Naive thymus-derived CD4-positive, alpha-beta T cell (primary cell): ENCODE measurements at regions of chr10 and their contacts with region 1.

Region 1: DNA sequence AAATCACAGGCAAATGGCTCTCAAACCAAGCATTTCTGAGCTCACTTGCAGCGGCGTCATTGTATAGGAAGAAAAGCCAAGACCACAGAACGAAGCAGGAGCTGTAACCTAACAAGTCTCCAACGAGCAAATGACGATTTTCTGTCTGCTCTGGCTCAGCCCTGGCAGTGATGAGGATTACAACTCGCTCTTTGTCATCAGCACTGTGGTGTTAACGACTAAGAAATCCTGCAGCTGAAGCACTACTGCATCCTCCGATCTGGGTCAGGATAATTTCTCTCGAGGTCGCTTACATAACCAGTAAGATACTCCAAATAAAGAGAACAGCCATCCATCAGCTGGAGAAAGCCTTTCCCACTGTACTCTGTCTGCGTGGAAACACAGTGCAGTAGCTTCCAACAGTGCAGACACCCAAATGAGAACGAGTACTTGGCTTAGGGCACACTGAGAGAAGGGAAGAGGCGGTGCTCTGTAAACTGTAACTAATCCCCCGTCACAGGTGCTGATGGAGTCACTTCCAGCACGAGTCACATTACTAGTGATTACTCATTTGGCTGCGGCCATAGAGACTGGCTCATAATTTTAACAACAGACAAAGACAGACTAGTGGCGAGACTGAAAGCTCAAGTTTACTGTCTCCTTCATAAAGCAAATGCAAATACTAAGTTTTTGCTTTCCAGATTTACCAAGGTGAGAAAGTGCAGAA is 135.8 kb downstream of the NRBF2 start:
- DNase-seq: peak; percentile 55 to 95 (median 89)
- ATAC-seq: peak; percentile 95
- H3K4me3 ChIP-seq: peak overlapping the region; percentile 60
- H3K4me3 Mint-ChIP-seq: peak overlapping the region; percentile 93 to 99 (median 98)
- H3K27ac ChIP-seq: peak overlapping the region; percentile 91
- H3K27ac Mint-ChIP-seq: peak overlapping the region; percentile 97 to 100 (median 99)
- H3K4me1 ChIP-seq: peaks cover 9 to 19% of the 10 kb centered on the region in 2 donors
- H3K4me1 Mint-ChIP-seq: peaks cover 9 to 33% (median 19%) of the 10 kb centered on the region in 7 donors
- H3K27me3 ChIP-seq: no peaks in the 10 kb centered on the region
- H3K27me3 Mint-ChIP-seq: no peaks in the 10 kb centered on the region

Region 2: DNA sequence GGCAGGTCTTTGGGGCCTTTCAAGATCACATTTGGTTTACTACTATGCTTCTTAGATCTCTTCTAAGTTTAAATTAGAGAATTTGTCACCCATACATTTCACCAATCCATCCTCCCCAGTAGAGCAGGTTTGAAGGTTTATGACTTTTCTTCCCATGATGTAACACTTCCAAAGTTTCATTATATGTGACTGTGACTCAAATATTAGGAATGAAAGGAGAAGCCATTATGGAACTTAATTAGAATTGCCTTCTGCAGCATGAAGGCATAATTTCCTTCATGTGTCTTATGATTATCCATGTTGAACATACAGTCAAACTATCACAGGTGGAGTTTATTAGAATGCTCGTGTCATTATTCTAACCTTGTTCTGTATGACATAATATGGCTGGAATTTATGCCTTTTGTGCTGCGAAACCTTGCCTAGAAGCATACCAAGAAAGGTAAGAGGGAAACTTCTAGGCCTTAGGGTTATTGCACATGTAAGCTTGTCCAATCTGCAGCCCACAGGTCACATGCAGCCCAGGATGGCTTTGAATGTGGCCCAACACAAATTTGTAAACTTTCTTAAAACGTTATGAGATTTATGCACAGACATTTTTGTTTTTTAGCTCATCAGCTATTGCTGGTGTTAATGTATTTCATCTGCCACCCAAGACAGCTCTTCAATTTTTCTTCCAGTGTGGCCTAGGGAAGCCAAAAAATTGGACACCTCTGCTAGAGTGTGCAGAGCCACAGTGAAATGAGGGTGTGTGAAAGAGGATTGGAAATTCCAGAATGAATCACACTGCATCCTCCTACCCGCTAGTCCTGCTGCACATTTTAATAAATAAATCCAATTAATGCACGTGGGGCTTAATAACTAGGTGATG is 1949.3 kb before region 1 on chr10:
- CTCF ChIA-PET with region 1: no interaction called
- POLR2A ChIA-PET with region 1: no interaction called
- intact Hi-C with region 1: no loop called
- DNase-seq: no peak
- ATAC-seq: no peak
- H3K4me3 ChIP-seq: no peak overlapping the region
- H3K4me3 Mint-ChIP-seq: no peak overlapping the region
- H3K27ac ChIP-seq: no peak overlapping the region
- H3K27ac Mint-ChIP-seq: no peak overlapping the region
- H3K4me1 ChIP-seq: no peaks in the 10 kb centered on the region
- H3K4me1 Mint-ChIP-seq: peaks cover 0 to 4% (median 3%) of the 10 kb centered on the region in 7 donors
- H3K27me3 ChIP-seq: no peaks in the 10 kb centered on the region
- H3K27me3 Mint-ChIP-seq: peaks cover 0 to 11% (median 0%) of the 10 kb centered on the region in 5 donors

Region 3: GRCh38 chr10:61896854-61897661 is 1371.9 kb before region 1 on chr10:
- CTCF ChIA-PET with region 1: no interaction called
- POLR2A ChIA-PET with region 1: no interaction called
- intact Hi-C with region 1: loop called (anchors 2 to 5 kb)
- DNase-seq: peak; percentile 20 to 76 (median 66)
- ATAC-seq: peak; percentile 80
- H3K4me3 ChIP-seq: peak overlapping the region; percentile 51
- H3K4me3 Mint-ChIP-seq: peak overlapping the region; percentile 77 to 98 (median 86)
- H3K27ac ChIP-seq: no peak overlapping the region
- H3K27ac Mint-ChIP-seq: peak overlapping the region; percentile 46 to 99 (median 86)
- H3K4me1 ChIP-seq: peaks cover 18 to 27% of the 10 kb centered on the region in 2 donors
- H3K4me1 Mint-ChIP-seq: peaks cover 12 to 35% (median 33%) of the 10 kb centered on the region in 7 donors
- H3K27me3 ChIP-seq: no peaks in the 10 kb centered on the region
- H3K27me3 Mint-ChIP-seq: no peaks in the 10 kb centered on the region

Region 4: GRCh38 chr10:62050893-62051433 is 1218.0 kb before region 1 on chr10:
- CTCF ChIA-PET with region 1: interaction called, 4 read pairs
- POLR2A ChIA-PET with region 1: no interaction called
- intact Hi-C with region 1: loop called in 1 of 2 experiments (anchors 5 kb)
- DNase-seq: peak; percentile 25 to 88 (median 78)
- ATAC-seq: peak; percentile 86
- H3K4me3 ChIP-seq: peak overlapping the region; percentile 62
- H3K4me3 Mint-ChIP-seq: peak overlapping the region; percentile 81 to 94 (median 88)
- H3K27ac ChIP-seq: peak overlapping the region; percentile 77
- H3K27ac Mint-ChIP-seq: peak overlapping the region; percentile 91 to 100 (median 96)
- H3K4me1 ChIP-seq: peaks cover 59 to 63% of the 10 kb centered on the region in 2 donors
- H3K4me1 Mint-ChIP-seq: peaks cover 60 to 99% (median 96%) of the 10 kb centered on the region in 7 donors
- H3K27me3 ChIP-seq: no peaks in the 10 kb centered on the region
- H3K27me3 Mint-ChIP-seq: no peaks in the 10 kb centered on the region

Region 5: GRCh38 chr10:63133056-63133820 is 135.7 kb before region 1 on chr10 and contains the start of gene NRBF2:
- CTCF ChIA-PET with region 1: no interaction called
- POLR2A ChIA-PET with region 1: interaction called, 6 read pairs
- intact Hi-C with region 1: loop called (anchors 1 kb)
- DNase-seq: peak; percentile 96 to 98 (median 98)
- ATAC-seq: peak; percentile 94
- H3K4me3 ChIP-seq: peak within 1 kb of the TSS; percentile 81
- H3K4me3 Mint-ChIP-seq: peak within 1 kb of the TSS; percentile 75 to 94 (median 92)
- H3K27ac ChIP-seq: peak within 1 kb of the TSS; percentile 98
- H3K27ac Mint-ChIP-seq: peak within 1 kb of the TSS; percentile 89 to 98 (median 96)
- H3K4me1 ChIP-seq: peaks cover 17 to 30% of the 10 kb centered on the region in 2 donors
- H3K4me1 Mint-ChIP-seq: peaks cover 10 to 49% (median 32%) of the 10 kb centered on the region in 7 donors
- H3K27me3 ChIP-seq: no peaks in the 10 kb centered on the region
- H3K27me3 Mint-ChIP-seq: no peaks in the 10 kb centered on the region
- total RNA-seq, gene NRBF2: 14.5 to 26.0 (median 19.2) TPM

Region 6: GRCh38 chr10:63227207-63227915 is 41.6 kb before region 1 on chr10:
- CTCF ChIA-PET with region 1: interaction called, 4 read pairs
- POLR2A ChIA-PET with region 1: interaction called, 18 read pairs
- intact Hi-C with region 1: loop called (anchors 1 kb)
- DNase-seq: peak in 6 of 9 donors; percentile 35 to 63 (median 56)
- ATAC-seq: peak; percentile 43
- H3K4me3 ChIP-seq: no peak overlapping the region
- H3K4me3 Mint-ChIP-seq: peak overlapping the region; percentile 8 to 69 (median 53)
- H3K27ac ChIP-seq: peak overlapping the region; percentile 80
- H3K27ac Mint-ChIP-seq: peak overlapping the region; percentile 28 to 97 (median 94)
- H3K4me1 ChIP-seq: peaks cover 23 to 42% of the 10 kb centered on the region in 2 donors
- H3K4me1 Mint-ChIP-seq: peaks cover 26 to 86% (median 75%) of the 10 kb centered on the region in 7 donors
- H3K27me3 ChIP-seq: no peaks in the 10 kb centered on the region
- H3K27me3 Mint-ChIP-seq: no peaks in the 10 kb centered on the region

Region 7: DNA sequence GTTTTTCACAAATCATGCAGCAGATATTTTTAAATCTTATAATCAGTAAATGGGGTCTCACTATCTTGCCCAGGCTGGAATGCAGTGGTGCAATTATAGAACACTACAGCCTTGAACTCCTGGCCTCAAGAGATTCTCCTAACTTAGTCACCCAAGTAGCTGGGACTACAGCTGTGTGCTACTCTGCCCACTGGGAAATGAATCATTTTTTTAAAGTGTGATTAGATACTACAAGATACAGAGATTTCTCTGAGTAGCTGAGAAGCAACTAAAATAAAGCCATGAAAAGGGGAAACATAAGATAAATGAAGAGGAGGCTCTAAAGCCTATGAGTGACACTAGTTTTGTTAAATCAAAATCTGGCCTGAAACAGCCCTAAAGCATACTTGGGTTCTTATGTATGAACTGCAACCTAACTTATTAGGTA is 77.1 kb after region 1 on chr10:
- CTCF ChIA-PET with region 1: no interaction called
- POLR2A ChIA-PET with region 1: no interaction called
- intact Hi-C with region 1: loop called in 1 of 2 experiments (anchors 5 kb)
- DNase-seq: no peak
- ATAC-seq: no peak
- H3K4me3 ChIP-seq: no peak overlapping the region
- H3K4me3 Mint-ChIP-seq: no peak overlapping the region
- H3K27ac ChIP-seq: no peak overlapping the region
- H3K27ac Mint-ChIP-seq: no peak overlapping the region
- H3K4me1 ChIP-seq: no peaks in the 10 kb centered on the region
- H3K4me1 Mint-ChIP-seq: peaks cover 0 to 27% (median 8%) of the 10 kb centered on the region in 7 donors
- H3K27me3 ChIP-seq: no peaks in the 10 kb centered on the region
- H3K27me3 Mint-ChIP-seq: no peaks in the 10 kb centered on the region

Region 8: DNA sequence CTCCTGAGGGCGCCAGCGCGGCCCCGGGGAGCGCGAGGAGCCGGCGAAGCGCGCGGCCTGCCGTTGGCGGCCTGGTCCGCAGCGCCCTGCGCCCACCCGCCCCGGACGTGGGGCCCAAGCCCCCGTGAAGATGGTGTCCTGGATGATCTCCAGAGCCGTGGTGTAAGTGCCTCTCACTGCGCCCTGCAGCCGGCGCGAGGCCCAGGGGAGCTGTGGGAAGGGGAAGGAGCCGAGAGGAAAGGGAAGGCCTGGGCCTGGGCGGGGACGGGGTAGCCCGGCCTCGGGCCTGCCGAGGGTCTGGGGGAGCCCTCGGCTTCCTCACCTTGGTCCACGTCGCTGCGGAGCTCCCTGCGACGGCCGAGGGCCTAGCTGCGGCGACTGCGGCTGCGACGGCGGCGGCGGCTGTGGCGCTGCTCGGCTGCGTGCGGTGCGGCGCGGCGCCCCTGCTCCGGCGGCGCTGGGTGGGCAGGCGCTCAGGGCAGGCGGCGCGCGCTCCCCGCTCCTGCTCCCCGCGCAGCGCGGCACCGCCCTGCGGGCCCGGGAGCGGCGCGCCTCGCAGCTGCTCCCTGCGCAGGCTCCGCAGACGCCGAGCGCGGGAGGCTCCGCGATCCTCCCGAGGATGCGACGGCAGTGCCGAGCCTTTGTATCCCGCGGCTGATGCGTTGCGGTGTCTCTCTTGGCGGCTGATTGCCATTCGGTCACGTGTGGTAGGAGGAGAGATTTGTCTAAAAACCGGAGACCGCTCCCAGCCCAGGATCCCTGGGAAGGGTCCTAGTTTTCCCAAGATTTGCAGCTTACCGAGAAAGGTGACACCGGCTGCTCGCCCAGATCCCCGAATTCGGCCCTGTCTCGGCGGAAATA is 252.7 kb after region 1 on chr10:
- CTCF ChIA-PET with region 1: interaction called, 5 read pairs
- POLR2A ChIA-PET with region 1: interaction called, 13 read pairs
- intact Hi-C with region 1: loop called (anchors 1 kb)
- DNase-seq: peak; percentile 45 to 70 (median 61)
- ATAC-seq: peak; percentile 78
- H3K4me3 ChIP-seq: peak overlapping the region; percentile 83
- H3K4me3 Mint-ChIP-seq: peak overlapping the region; percentile 72 to 92 (median 88)
- H3K27ac ChIP-seq: peak overlapping the region; percentile 86
- H3K27ac Mint-ChIP-seq: peak overlapping the region; percentile 81 to 95 (median 86)
- H3K4me1 ChIP-seq: peaks cover 4 to 30% of the 10 kb centered on the region in 2 donors
- H3K4me1 Mint-ChIP-seq: peaks cover 36 to 80% (median 67%) of the 10 kb centered on the region in 7 donors
- H3K27me3 ChIP-seq: no peaks in the 10 kb centered on the region
- H3K27me3 Mint-ChIP-seq: no peaks in the 10 kb centered on the region